ENCODE measurements at regions of chr17 and their contacts with region 1.

Region 1: DNA sequence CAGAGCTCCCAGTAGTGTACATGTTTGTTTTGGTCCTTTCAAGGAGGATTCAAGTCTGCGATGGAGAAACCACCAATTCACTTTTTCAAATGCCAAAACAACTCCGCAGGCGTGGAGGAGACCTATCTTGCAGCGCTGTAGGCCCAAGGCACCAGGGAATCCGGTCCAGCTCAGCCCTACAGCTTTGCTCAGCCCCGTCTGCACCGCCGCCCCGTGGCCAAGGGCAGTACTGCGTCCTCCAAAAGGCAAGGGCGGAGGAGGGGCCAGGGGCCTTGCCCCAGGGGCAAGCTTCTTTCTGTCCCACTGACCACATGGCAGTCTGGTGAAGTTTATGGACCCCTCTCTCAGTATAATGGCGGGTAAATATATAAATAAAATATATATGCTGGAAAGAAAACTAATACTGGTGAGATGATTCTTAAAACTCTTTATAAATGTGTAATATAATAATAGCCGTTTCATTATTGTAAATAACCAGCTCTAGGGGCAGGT is 709 bp upstream of the CD300LG start:
- DNase-seq: peak; percentile 76
- H3K4me3 Mint-ChIP-seq: no peak overlapping the region
- H3K27ac Mint-ChIP-seq: no peak overlapping the region
- H3K4me1 Mint-ChIP-seq: no peaks in the 10 kb centered on the region
- H3K27me3 Mint-ChIP-seq: peaks cover 5% of the 10 kb centered on the region
- CTCF ChIP-seq: peak; percentile 96

Region 2: GRCh38 chr17:43683928-43684653 is 162.2 kb before region 1 on chr17:
- CTCF ChIA-PET with region 1: no interaction called
- POLR2A ChIA-PET with region 1: no interaction called
- intact Hi-C with region 1: no loop called
- DNase-seq: no peak
- H3K4me3 Mint-ChIP-seq: no peak overlapping the region
- H3K27ac Mint-ChIP-seq: no peak overlapping the region
- H3K4me1 Mint-ChIP-seq: no peaks in the 10 kb centered on the region
- H3K27me3 Mint-ChIP-seq: no peaks in the 10 kb centered on the region
- CTCF ChIP-seq: no peak

Region 3: DNA sequence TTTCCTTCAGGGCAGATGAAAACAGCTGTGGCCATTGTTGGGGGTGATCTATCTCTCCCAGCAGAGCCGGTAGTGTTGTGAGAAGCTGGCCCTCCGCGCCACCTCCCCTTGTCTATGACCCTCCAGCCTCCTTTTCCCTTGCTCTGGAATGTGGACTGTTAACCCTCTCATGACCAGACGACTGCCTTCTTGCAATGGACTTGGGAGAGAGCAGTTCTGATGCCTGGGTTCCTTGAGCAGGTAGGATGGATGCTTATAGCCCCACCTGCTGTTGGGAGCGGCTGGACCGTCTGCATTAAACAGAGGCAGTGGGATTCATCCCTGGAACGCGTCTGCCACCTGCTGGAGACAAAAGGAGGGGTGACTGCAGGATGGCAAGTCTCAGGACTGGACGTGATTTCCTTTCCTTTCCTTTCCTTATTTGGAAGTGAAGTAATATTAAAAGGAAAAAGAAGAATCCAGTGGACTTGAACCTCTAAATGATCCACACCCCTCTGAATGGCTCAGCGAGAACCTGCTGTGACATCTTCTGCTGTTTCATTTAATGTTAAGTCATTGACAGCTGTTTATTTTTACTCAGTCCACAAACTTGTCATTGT is 85.9 kb before region 1 on chr17:
- CTCF ChIA-PET with region 1: interaction called, 8 read pairs
- POLR2A ChIA-PET with region 1: interaction called, 6 read pairs
- intact Hi-C with region 1: loop called (anchors 1 kb)
- DNase-seq: peak; percentile 95
- H3K4me3 Mint-ChIP-seq: no peak overlapping the region
- H3K27ac Mint-ChIP-seq: no peak overlapping the region
- H3K4me1 Mint-ChIP-seq: peaks cover 12% of the 10 kb centered on the region
- H3K27me3 Mint-ChIP-seq: no peaks in the 10 kb centered on the region
- CTCF ChIP-seq: peak; percentile 98

Region 4: GRCh38 chr17:43778337-43779144 is 67.7 kb before region 1 on chr17 and contains the start of gene DUSP3:
- CTCF ChIA-PET with region 1: interaction called, 4 read pairs
- POLR2A ChIA-PET with region 1: interaction called, 5 read pairs
- intact Hi-C with region 1: loop called (anchors 1 kb)
- DNase-seq: peak; percentile 78
- H3K4me3 Mint-ChIP-seq: peak within 1 kb of the TSS; percentile 77
- H3K27ac Mint-ChIP-seq: peak within 1 kb of the TSS; percentile 93
- H3K4me1 Mint-ChIP-seq: no peaks in the 10 kb centered on the region
- H3K27me3 Mint-ChIP-seq: no peaks in the 10 kb centered on the region
- CTCF ChIP-seq: no peak
- total RNA-seq, gene DUSP3: 39.7 and 55.0 TPM in 2 replicates

Region 5: DNA sequence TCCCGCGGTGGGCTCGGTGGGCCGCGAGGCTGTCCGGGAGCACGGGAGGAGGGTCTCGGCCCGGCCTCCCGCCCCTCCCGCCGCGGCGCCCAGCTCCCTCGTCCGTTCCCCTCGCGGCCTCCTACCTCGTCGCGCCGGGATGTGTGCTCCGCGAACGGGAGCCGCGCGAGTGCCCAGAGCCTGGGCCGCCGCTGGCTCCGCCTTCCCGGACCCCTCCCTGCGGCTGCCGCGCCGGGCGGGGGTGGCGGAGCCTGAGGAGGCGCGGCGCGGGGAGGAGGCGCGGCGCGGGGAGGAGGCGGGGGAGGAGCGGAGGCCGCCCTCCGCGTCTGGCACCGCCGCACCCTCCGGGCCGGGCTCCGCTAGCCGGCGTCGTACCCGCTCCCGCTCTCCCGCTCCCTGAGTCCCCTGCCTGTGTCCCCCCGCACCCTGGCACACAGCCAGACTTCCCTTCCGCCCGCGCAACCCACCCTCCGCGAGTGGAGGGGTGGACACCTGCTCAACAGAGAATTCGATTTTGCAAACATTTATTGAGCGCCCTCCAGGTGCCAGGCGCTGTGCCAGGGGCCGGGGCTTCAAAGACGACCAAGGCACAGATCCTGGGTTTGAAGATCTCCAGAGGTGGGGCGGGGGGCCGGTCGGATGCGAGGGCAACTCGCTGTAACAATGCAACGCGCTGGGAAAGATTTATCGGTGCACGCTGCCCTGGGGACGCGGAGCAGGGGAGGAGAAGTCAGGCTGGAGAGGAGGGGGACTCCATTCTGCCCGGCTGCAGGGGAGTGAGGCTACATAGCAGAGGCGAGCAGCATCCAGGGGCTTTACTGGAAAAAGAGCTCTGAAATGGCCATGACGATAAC is 13.1 kb before region 1 on chr17 and contains the start of gene MPP3:
- CTCF ChIA-PET with region 1: interaction called, 13 read pairs
- POLR2A ChIA-PET with region 1: interaction called, 5 read pairs
- intact Hi-C with region 1: no loop called
- DNase-seq: peak; percentile 80
- H3K4me3 Mint-ChIP-seq: peak within 1 kb of the TSS; percentile 77
- H3K27ac Mint-ChIP-seq: no peak within 1 kb of the TSS
- H3K4me1 Mint-ChIP-seq: peaks cover 12% of the 10 kb centered on the region
- H3K27me3 Mint-ChIP-seq: no peaks in the 10 kb centered on the region
- CTCF ChIP-seq: no peak
- total RNA-seq, gene MPP3: 18.7 and 24.5 TPM in 2 replicates